Naive thymus-derived CD4-positive, alpha-beta T cell (primary cell): ENCODE measurements at regions of chr21 and their contacts with region 1.

Region 1: DNA sequence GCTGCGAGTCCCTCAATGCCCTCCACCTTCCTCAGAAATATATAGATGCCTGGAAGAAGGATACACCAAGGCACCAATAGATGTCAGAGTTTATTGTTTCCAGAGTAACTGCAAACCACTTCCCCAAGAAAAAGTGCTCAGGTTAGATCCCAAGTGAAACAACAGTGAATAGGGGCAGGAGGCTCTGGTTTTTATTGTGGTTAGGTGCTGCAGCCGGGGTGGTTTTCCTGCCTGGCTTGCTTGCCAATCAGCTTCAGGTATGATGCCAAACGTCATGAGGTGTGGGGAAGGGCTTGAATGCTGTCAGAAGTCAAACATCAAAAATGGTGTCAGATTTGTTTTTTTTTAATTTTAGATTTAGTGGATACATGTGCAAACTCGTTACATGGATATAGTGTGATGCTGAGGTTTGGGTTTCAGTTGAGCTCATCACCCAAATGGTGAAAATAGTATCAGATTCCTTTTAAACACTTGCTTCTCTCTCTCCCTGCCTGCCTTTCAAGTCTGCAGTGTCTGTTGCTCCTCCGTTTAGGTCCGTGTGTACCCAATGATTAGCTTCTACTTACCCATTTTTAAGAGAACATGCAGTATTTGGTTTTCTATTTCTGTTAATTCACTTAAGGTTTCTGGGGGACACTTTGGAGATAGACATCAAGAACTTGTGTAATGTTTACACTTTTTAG is 1317.0 kb downstream of the MRPL39 start:
- DNase-seq: peak in 8 of 9 donors; percentile 23 to 78 (median 68)
- ATAC-seq: peak; percentile 93
- H3K4me3 ChIP-seq: no peak overlapping the region
- H3K4me3 Mint-ChIP-seq: peak overlapping the region; percentile 21 to 79 (median 58)
- H3K27ac ChIP-seq: no peak overlapping the region
- H3K27ac Mint-ChIP-seq: peak overlapping the region in 7 of 9 donors; percentile 18 to 90 (median 71)
- H3K4me1 ChIP-seq: no peaks in the 10 kb centered on the region
- H3K4me1 Mint-ChIP-seq: peaks cover 3 to 19% (median 10%) of the 10 kb centered on the region in 7 donors
- H3K27me3 ChIP-seq: no peaks in the 10 kb centered on the region
- H3K27me3 Mint-ChIP-seq: no peaks in the 10 kb centered on the region

Region 2: DNA sequence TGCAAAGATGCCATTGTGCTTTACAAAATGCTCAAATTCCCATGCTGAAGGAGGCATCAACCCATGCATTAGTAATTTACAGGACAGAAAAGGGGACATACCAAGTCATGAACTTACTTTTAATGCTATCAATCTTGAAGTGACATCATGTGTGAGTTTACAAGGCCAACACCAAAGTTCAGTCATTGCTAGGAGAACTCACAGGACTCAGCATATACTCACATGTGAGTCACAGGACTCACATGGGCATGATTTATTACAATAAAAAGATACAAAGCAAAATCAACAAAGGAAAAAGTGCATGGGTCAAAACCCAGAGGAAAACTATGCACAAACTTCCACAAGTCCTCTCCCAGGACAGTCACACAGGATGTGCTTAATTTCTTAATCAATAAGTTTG is 339.0 kb before region 1 on chr21:
- CTCF ChIA-PET with region 1: interaction called, 4 read pairs
- POLR2A ChIA-PET with region 1: no interaction called
- intact Hi-C with region 1: loop called in 1 of 2 experiments (anchors 10 kb)
- DNase-seq: no peak
- ATAC-seq: no peak
- H3K4me3 ChIP-seq: no peak overlapping the region
- H3K4me3 Mint-ChIP-seq: no peak overlapping the region
- H3K27ac ChIP-seq: no peak overlapping the region
- H3K27ac Mint-ChIP-seq: no peak overlapping the region
- H3K4me1 ChIP-seq: peaks cover 0 to 17% of the 10 kb centered on the region in 2 donors
- H3K4me1 Mint-ChIP-seq: peaks cover 7 to 37% (median 30%) of the 10 kb centered on the region in 7 donors
- H3K27me3 ChIP-seq: no peaks in the 10 kb centered on the region
- H3K27me3 Mint-ChIP-seq: peaks cover 0 to 2% (median 0%) of the 10 kb centered on the region in 5 donors

Region 3: DNA sequence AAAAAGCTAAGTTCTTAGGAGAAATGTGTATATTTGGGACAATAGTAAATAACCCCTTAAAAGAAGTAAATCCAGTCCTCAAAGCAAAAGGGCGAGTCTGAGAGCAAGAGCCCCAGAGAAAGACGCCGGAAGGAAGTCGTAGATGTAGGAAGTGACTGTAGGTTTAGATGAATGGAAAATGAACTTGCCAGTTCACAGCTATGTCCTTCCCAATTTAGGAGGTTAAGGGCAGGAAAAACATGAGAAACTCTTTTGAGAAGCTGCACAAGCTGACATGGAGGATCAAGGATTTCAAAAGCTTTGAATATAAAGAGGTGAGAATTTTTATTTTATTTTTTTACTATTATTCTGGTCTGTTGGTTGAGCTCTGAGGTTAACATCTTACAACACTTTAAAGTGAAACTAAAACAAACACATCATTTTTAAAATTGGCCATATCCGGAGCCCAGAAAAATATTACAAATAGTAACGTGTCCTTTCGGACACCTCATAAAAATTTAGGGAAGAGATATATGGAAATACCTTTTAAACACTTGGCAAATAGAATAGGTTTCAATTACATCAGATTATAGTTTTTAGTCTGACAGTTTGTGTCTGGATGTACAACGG is 138.4 kb after region 1 on chr21:
- CTCF ChIA-PET with region 1: no interaction called
- POLR2A ChIA-PET with region 1: no interaction called
- intact Hi-C with region 1: loop called in 1 of 2 experiments (anchors 1 kb)
- DNase-seq: peak in 6 of 9 donors; percentile 20 to 44 (median 27)
- ATAC-seq: peak; percentile 69
- H3K4me3 ChIP-seq: peak overlapping the region; percentile 57
- H3K4me3 Mint-ChIP-seq: peak overlapping the region; percentile 76 to 96 (median 88)
- H3K27ac ChIP-seq: peak overlapping the region; percentile 36
- H3K27ac Mint-ChIP-seq: peak overlapping the region; percentile 63 to 91 (median 83)
- H3K4me1 ChIP-seq: peaks cover 0 to 4% of the 10 kb centered on the region in 2 donors
- H3K4me1 Mint-ChIP-seq: peaks cover 5 to 44% (median 27%) of the 10 kb centered on the region in 7 donors
- H3K27me3 ChIP-seq: no peaks in the 10 kb centered on the region
- H3K27me3 Mint-ChIP-seq: peaks cover 0 to 8% (median 4%) of the 10 kb centered on the region in 5 donors